Lower leg skin (tissue), 4 donors: ENCODE measurements at regions of chr9 and their contacts with region 1.

Region 1: DNA sequence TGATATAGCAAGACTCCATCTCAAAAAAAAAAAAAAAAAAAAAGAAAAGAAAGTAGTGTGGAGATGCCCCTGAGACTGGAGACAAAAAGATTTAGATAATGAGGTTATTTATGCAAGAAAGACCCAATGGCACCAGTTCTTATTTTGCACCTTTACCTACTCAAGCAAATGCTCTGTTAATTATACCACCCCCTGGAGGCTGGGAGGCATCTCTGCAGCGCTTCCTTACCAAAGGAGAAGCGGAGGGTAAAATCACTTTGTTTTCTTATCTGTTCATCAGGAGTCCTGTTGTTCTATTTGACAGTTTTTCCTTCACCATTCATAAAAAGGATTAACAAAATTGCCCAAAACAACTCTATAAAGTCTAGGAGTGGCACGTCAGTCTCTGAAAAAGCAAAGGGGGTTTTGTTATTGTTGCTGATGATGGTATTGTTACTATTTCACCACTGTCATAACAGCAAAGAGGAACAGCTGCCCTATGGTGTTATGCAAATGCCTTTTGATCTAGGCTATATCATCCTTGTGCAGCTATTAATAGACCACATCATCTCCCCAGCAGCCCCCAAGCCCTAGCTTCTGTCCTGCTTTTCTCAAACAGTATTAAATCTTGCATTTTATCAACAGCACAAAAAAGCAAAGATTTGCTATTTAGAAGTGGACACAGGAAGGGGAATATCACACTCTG is 174.0 kb downstream of the PALM2AKAP2 start:
- DNase-seq: no peak
- H3K4me3 ChIP-seq: no peak overlapping the region
- CTCF ChIP-seq: no peak
- POLR2A ChIP-seq: no peak

Region 2: DNA sequence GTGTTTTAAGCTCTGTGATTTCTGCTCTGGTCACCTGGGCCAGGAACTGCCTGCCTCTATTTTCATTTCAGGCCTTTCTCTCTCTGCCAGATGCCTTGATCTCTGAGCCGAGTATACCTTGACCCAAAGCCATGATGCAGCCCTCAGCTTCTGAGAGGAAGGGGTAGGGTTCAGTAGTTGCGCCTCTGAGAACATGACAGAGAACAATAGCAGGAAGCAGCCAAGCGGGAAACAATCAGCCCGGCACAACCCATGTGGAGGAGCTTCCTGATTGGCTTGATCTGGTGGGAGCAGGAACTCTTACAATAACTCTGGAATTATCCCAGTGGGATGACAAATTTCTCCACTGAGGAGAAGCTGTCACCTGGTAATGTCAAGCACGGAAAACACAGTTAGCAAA is 46.6 kb before region 1 on chr9:
- intact Hi-C with region 1: loop called (anchors 1 kb)
- DNase-seq: no peak
- H3K4me3 ChIP-seq: no peak overlapping the region
- CTCF ChIP-seq: no peak
- POLR2A ChIP-seq: no peak

Region 3: GRCh38 chr9:109918339-109919163 is 35.4 kb before region 1 on chr9:
- intact Hi-C with region 1: no loop called
- DNase-seq: no peak
- H3K4me3 ChIP-seq: no peak overlapping the region
- CTCF ChIP-seq: no peak
- POLR2A ChIP-seq: no peak

Region 4: DNA sequence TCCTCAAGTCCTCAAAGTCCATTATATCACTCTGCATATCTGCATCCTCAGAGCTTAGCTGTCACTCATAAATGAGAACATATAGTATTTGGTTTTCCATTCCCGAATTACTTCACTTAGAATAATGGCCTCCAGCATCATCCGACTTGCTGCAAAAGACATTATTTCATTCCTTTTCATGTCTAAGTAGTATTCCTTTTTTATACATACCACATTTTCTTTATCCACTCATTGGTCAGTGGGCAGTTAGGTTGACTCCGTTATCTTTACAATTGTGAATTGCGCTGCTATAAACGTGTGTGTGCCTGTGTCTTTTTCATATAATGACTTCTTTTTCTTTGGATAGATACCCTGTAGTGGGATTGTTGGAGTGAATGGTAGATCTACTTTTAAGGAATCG is 1258.9 kb after region 1 on chr9:
- intact Hi-C with region 1: loop called (anchors 5 kb)
- DNase-seq: no peak
- H3K4me3 ChIP-seq: no peak overlapping the region
- CTCF ChIP-seq: no peak
- POLR2A ChIP-seq: no peak